Posterior vena cava (tissue), 2 donors: ENCODE measurements at regions of chr11 and their contacts with region 1.

Region 1: GRCh38 chr11:15958910-15959309 is 397.4 kb downstream of the SOX6 start:
- DNase-seq: no peak

Region 2: GRCh38 chr11:15926071-15926470 is 32.8 kb before region 1 on chr11:
- intact Hi-C with region 1: loop called in 1 of 2 experiments (anchors 2 kb)
- DNase-seq: no peak

Region 3: DNA sequence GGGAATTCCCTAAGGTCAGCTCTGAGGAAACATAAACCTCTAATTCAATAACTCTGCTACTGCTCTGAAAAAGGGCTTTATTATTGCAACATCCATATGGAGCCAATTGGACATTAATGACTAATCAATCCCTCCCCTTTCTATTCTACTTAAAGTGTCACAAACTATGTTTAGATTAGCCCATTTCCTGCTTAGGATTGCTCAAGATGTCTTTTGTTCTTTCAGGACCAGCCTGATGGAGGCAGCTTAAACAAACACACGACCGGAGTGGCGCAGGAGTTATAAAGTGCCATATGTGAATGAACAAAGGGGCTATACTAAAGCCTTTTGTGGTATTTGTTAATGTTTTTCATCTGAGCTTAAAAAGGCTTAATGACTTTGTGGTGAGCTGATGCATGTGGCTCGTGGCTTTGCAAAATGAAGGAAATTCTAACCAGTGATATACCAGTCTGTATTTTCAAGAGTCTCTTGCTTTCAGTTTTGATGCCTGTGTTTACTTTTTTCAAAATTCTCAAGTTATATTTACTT is 43.1 kb after region 1 on chr11:
- intact Hi-C with region 1: no loop called
- DNase-seq: no peak

Region 4: GRCh38 chr11:16018931-16019330 is 60.0 kb after region 1 on chr11:
- intact Hi-C with region 1: loop called in 1 of 2 experiments (anchors 2 kb)
- DNase-seq: no peak

Region 5: DNA sequence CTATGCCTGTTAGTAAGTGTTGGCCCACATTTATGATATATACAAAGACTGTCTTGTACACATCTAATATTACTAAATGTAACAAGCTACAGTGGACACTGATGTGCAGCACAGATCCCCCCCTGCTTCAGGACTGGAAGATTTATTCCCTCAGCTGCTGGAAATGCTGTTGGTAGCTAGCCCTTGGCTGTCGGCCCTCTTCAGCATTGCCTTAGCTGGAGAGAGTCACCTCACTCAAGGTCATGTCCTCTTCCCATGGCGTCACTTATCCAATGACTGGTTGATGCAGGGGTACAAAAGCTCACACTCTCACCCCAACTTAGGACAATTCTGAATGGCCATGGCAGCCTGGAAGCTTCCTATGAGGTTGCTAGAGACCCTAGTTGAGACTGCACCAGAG is 84.7 kb after region 1 on chr11:
- intact Hi-C with region 1: no loop called
- DNase-seq: no peak